Left ventricle myocardium superior (tissue), 1 donor: ENCODE measurements at regions of chr9 and their contacts with region 1.

Region 1: DNA sequence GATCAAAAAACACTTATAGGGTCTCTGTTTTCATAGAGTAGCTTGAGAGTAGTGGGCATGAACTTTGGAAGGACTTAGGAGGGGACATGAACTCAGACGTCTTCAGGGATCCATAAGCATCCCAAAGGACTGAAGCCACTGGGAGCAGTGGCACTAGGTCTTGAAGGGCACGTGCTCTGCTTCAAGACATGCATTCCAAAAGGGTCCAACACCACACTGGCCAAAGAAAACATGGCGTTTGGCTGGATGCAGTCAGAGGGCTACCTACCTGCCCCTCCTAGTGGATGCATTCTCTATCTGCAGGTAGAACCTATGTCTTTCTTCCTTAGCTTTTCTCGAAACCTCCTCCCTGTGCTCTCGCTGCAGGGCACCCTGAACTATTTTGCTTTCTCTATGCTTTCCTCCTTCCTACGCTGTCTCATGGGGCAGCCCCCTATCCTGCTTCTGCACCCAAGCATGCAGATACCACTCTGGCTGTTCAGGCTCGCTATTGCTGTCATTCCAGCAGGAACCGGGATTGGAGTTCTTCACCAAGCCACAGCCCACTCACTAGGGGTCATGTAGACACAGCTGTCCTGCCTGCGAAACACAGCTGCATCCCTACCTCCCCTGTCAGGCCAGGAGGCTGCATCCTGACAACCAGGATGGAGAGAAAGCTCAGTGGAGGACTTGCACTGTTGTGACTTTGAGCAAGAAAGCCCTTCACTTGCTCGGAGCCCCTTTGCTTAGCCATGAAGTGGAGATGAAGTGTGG is 11.9 kb downstream of the FAM240B start:
- DNase-seq: no peak
- ATAC-seq: no peak

Region 2: GRCh38 chr9:38651400-38652042 is 56.5 kb before region 1 on chr9:
- intact Hi-C with region 1: loop called (anchors 10 kb)
- DNase-seq: peak; percentile 62
- ATAC-seq: peak; percentile 74

Region 3: GRCh38 chr9:38768351-38768761 is 60.3 kb after region 1 on chr9:
- intact Hi-C with region 1: no loop called
- DNase-seq: no peak
- ATAC-seq: peak; percentile 58